ENCODE measurements at regions of chr13 and their contacts with region 1.

Region 1: DNA sequence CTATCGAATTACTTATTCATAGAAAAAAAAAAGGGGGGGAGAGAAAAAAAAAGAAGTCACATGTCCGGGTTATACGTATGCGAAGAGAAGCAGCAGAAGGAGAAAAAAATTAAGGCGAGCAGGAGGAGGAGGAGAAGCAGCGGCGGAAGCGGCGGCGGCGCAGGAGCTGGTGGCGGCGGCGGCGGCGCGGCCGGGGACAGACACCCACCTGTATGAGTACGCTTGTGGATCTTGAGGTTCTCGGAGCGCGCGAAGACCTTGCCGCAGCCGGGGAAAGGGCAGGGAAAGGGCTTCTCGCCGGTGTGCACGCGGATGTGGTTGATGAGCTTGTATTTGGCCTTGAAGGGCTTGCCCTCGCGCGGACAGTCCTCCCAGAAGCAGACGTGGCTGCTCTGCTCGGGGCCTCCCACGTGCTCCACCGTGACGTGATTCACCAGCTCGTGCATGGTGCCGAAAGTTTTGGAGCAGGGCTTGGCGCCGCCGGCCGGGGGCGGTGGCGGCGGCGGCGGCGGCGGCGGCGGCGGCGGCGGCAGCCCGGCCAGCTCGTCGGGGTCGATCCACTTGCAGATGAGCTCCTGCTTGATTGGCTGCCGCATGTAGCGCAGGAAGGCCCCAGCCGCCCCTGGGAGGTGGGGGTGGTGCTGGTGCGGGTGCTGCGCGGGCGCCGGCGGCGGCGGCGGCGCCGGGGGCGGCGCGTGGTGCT is 1.5 kb downstream of the ZIC5 start:
- DNase-seq: peak; percentile 56
- H3K4me3 Mint-ChIP-seq: peak overlapping the region; percentile 65
- H3K27ac Mint-ChIP-seq: peak overlapping the region; percentile 69
- H3K4me1 Mint-ChIP-seq: peaks cover 17% of the 10 kb centered on the region
- H3K27me3 Mint-ChIP-seq: peaks cover 71% of the 10 kb centered on the region

Region 2: DNA sequence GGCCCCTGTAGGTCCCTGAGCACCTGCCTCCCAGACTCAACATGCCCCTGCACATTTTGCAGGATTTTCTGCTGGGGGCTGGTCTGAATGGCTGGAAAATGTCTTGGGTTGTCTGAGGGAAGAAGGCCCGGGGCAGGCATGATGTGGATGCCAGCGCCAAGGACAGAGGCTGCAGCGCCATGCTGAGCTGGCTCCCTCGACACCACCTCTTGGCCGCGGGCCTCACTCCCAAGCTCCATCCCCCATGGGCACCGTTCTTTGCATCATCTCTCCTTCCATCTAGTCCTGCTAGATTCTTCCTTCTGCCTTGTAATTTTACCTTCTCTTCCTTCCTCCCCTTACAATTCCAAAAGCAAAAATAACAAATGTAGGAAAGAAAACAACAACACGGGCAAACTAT is 69.1 kb before region 1 on chr13:
- CTCF ChIA-PET with region 1: interaction called, 4 read pairs
- POLR2A ChIA-PET with region 1: no interaction called
- intact Hi-C with region 1: loop called (anchors 5 kb)
- DNase-seq: no peak
- H3K4me3 Mint-ChIP-seq: no peak overlapping the region
- H3K27ac Mint-ChIP-seq: no peak overlapping the region
- H3K4me1 Mint-ChIP-seq: no peaks in the 10 kb centered on the region
- H3K27me3 Mint-ChIP-seq: peaks cover 43% of the 10 kb centered on the region

Region 3: GRCh38 chr13:99959538-99960230 is 10.4 kb before region 1 on chr13:
- CTCF ChIA-PET with region 1: no interaction called
- POLR2A ChIA-PET with region 1: interaction called, 4 read pairs
- intact Hi-C with region 1: loop called (anchors 1 kb)
- DNase-seq: no peak
- H3K4me3 Mint-ChIP-seq: peak overlapping the region; percentile 12
- H3K27ac Mint-ChIP-seq: no peak overlapping the region
- H3K4me1 Mint-ChIP-seq: peaks cover 29% of the 10 kb centered on the region
- H3K27me3 Mint-ChIP-seq: peaks cover 73% of the 10 kb centered on the region

Region 4: GRCh38 chr13:100044936-100045335 is 74.9 kb after region 1 on chr13:
- CTCF ChIA-PET with region 1: no interaction called
- POLR2A ChIA-PET with region 1: no interaction called
- intact Hi-C with region 1: no loop called
- DNase-seq: no peak
- H3K4me3 Mint-ChIP-seq: no peak overlapping the region
- H3K27ac Mint-ChIP-seq: no peak overlapping the region
- H3K4me1 Mint-ChIP-seq: no peaks in the 10 kb centered on the region
- H3K27me3 Mint-ChIP-seq: no peaks in the 10 kb centered on the region